A673 (cell line): ENCODE measurements at regions of chr1 and their contacts with region 1.

Region 1: DNA sequence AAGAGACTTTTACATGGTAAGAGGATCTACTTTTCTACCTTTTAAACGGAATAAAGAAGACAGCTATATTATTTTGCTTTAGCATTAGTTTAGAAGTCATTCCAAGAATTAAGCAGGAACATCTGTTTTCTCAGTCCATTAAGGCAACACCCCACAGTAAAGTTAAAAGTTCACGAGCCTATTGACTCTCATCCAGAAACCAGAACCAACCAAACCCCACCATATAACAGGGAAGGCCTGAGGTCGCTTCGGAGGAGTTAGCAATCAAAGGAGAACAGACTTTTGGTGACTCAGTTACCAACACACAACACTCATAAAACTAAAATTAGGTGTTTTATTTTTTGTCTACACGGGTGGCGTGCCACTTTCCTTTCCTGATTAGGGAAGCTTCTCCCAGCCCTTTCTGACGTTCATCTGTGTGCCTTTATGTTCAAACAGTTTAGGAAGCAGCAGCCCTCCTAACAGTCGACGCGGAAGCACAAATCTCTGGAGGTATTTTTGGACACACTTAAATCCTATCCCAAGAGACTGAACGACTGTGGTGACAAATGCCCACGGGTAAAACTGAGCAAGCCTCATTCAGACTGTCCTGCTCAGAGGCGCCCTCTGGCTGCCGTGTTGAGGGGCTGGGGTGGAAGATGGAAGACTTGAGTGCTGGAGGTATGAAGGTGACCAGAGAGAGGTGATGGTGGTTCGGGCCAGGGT is 8.6 kb upstream of the PLA2G2C start:
- DNase-seq: peak; percentile 78
- H3K4me3 ChIP-seq: no peak overlapping the region
- H3K27ac ChIP-seq: no peak overlapping the region
- H3K4me1 ChIP-seq: peaks cover 5% of the 10 kb centered on the region
- H3K27me3 ChIP-seq: peaks cover 54% of the 10 kb centered on the region
- CTCF ChIP-seq: peak; percentile 97

Region 2: DNA sequence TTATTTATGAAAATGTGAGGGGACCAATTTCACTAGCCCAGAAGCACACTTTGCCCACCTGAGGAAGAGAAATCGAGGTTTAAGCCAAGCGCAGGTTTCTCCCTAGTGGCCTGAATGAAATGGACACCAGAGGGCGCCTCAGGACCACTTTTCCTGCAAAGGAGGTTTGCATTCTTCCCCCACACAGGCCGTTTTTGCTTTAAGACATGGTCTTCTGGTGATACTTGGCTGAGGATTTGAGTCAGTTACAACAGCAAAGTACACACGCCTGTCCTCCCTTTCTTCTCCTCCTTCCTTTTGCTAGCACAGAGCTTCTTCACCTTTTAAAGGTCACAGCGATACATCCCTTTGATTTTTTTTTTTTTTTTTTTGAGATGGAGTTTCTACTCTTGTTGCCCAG is 276.9 kb before region 1 on chr1:
- CTCF ChIA-PET with region 1: interaction called, 4 read pairs
- POLR2A ChIA-PET with region 1: no interaction called
- intact Hi-C with region 1: loop called (anchors 1 kb)
- DNase-seq: peak; percentile 83
- H3K4me3 ChIP-seq: no peak overlapping the region
- H3K27ac ChIP-seq: no peak overlapping the region
- H3K4me1 ChIP-seq: no peaks in the 10 kb centered on the region
- H3K27me3 ChIP-seq: no peaks in the 10 kb centered on the region
- CTCF ChIP-seq: peak; percentile 92

Region 3: GRCh38 chr1:19974822-19975416 is 220.0 kb before region 1 on chr1:
- CTCF ChIA-PET with region 1: interaction called, 3 read pairs
- POLR2A ChIA-PET with region 1: no interaction called
- intact Hi-C with region 1: loop called (anchors 5 kb)
- DNase-seq: peak; percentile 71
- H3K4me3 ChIP-seq: no peak overlapping the region
- H3K27ac ChIP-seq: no peak overlapping the region
- H3K4me1 ChIP-seq: peaks cover 4% of the 10 kb centered on the region
- H3K27me3 ChIP-seq: no peaks in the 10 kb centered on the region
- CTCF ChIP-seq: peak; percentile 78

Region 4: GRCh38 chr1:20139091-20139491 is 55.8 kb before region 1 on chr1 and contains the start of gene PLA2G2F:
- CTCF ChIA-PET with region 1: no interaction called
- POLR2A ChIA-PET with region 1: no interaction called
- intact Hi-C with region 1: no loop called
- DNase-seq: no peak
- H3K4me3 ChIP-seq: no peak within 1 kb of the TSS
- H3K27ac ChIP-seq: no peak within 1 kb of the TSS
- H3K4me1 ChIP-seq: no peaks in the 10 kb centered on the region
- H3K27me3 ChIP-seq: peaks cover 2% of the 10 kb centered on the region
- CTCF ChIP-seq: no peak
- total RNA-seq, gene PLA2G2F: not detected in 2 replicates